OCI-LY7 (cell line): ENCODE measurements at regions of chr4 and their contacts with region 1.

Region 1: DNA sequence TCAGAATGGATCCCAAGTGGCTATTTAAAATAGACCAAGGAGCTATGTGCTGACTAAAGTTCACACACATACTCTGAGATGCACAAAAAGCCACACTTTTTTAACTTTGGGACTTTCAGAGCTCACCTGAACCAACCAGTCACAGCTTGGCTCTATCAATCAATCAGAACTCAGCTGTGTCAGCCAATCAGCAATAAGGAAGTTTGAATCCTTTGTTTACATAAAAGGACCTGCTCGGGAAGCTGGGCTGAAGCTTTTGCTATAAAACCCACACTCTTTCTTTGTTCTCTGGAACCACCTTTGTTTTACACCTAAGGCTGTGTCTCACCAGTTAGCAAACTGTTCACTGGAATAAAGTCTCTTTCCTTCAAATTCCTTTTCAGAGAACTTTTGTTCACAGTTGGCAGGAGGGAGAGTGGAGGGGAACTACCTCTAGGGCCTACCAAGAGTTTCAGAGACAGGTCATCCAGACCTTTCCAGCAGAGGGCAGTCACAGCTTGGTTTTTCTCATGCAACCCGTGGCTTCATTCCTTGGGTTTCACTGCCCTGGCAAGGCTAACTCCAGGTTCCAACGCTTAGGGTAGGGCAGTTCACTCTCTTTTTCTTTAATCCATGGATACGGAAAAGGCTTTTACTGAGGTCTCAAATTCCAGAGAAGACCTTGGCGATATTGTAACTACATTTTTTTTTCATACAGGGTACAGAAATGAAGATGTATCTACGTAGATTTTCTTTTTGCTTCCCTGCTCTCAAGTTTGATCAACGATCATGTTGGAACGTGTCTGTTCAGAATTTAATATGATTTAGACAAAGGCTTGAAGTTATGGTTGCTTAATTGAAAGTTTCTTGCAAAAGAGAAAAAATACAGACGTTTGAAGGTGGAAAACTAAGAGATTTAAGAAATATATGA is 80.7 kb downstream of the GPRIN3 start:
- DNase-seq: peak; percentile 84
- H3K4me3 ChIP-seq: no peak overlapping the region
- H3K27ac ChIP-seq: no peak overlapping the region
- H3K4me1 ChIP-seq: no peaks in the 10 kb centered on the region
- CTCF ChIP-seq: peak; percentile 93

Region 2: DNA sequence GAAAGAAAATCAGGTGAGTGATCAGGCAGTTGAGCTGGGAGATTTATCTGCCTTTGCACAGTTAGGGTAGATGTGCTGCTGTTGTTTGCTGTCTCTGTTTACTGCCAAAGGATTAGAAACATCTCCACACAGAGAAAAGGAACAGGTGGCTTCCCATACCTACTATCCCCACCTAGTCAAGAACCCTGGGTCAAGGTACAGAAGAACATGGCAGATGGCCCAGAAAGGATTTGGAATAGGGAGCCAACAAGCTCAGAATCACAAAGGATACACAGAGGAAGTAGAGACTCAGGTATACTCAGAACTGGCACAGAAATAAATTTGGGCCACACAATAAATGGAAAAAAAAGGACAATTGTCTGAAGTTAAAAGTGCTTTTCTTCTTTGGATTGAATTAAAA is 51.3 kb before region 1 on chr4:
- CTCF ChIA-PET with region 1: no interaction called
- POLR2A ChIA-PET with region 1: no interaction called
- intact Hi-C with region 1: no loop called
- DNase-seq: no peak
- H3K4me3 ChIP-seq: no peak overlapping the region
- H3K27ac ChIP-seq: no peak overlapping the region
- H3K4me1 ChIP-seq: no peaks in the 10 kb centered on the region
- CTCF ChIP-seq: no peak

Region 3: GRCh38 chr4:89216866-89217265 is 10.1 kb before region 1 on chr4:
- CTCF ChIA-PET with region 1: no interaction called
- POLR2A ChIA-PET with region 1: interaction called, 11 read pairs
- intact Hi-C with region 1: no loop called
- DNase-seq: no peak
- H3K4me3 ChIP-seq: no peak overlapping the region
- H3K27ac ChIP-seq: no peak overlapping the region
- H3K4me1 ChIP-seq: no peaks in the 10 kb centered on the region
- CTCF ChIP-seq: no peak

Region 4: DNA sequence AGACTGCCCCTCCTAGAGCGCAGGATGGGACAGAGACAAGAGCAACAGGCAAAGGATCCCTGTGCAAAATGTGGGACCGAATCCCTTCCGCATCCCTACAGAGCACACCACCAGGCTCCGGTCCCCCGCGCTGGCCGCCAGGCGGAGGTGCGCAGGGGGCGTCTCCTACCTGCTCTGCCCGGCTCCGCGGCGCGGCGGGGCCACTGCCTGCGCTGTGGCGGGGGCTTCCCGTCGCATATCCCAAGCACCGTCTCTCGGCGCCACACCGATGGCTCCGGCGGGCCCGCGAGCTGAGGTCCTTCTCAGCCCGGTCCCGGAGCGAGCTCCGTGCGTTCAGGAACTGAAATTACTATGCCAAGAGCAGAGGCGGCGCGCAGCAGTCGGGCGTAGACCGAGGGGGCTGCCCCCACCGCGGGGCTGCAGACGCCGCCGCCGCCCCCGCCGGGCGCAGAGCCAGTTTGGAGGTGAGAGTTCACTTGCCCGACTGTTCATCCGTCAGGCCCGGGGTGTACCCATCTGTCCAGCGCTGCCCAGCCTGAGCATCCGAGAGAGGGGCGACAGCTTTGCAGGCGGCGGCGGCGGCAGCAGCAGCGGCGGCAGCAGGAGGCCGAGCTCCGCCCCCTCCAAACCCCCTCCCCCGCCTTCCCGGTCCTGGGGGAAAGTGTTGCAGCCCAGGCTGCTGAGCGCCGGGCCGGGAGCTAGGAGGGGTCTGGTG is 80.7 kb after region 1 on chr4 and contains the start of gene GPRIN3:
- CTCF ChIA-PET with region 1: no interaction called
- POLR2A ChIA-PET with region 1: no interaction called
- intact Hi-C with region 1: loop called (anchors 5 kb)
- DNase-seq: peak; percentile 67
- H3K4me3 ChIP-seq: peak within 1 kb of the TSS; percentile 82
- H3K27ac ChIP-seq: peak within 1 kb of the TSS; percentile 26
- H3K4me1 ChIP-seq: peaks cover 48% of the 10 kb centered on the region
- CTCF ChIP-seq: no peak
- total RNA-seq, gene GPRIN3: 3.6 and 4.6 TPM in 2 replicates

Region 5: GRCh38 chr4:89353514-89353913 is 126.6 kb after region 1 on chr4:
- CTCF ChIA-PET with region 1: no interaction called
- POLR2A ChIA-PET with region 1: interaction called, 5 read pairs
- intact Hi-C with region 1: loop called (anchors 2 kb)
- DNase-seq: peak; percentile 44
- H3K4me3 ChIP-seq: no peak overlapping the region
- H3K27ac ChIP-seq: no peak overlapping the region
- H3K4me1 ChIP-seq: no peaks in the 10 kb centered on the region
- CTCF ChIP-seq: peak; percentile 52

Region 6: DNA sequence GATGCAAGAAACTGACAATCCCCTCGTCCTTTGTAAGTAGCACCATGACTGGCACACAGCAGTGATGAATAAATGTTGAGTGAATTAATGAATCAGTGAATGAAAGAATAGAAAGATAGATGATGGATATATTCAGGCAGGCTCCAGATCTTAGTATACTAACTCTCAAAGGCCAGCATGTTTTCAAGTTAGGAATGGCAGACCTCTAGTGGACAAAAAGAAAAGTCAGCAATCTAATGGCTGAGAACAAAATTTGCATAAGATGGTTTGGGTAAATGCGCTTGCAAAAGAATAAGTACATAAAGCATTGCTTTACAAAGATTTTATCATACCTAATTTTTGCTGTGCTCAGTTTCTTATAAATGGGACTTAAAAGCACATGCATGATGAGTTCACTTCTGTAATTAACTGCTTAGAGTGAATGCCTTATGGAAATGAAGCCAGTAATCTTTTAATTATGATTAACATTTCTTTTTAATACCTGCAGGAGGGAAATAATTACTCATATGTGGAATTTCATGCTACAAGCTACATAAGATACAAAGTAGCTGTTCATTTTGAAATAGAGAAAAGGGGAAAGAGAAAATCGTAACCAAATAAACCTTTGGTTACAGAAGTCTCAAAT is 207.6 kb after region 1 on chr4:
- CTCF ChIA-PET with region 1: interaction called, 3 read pairs
- POLR2A ChIA-PET with region 1: interaction called, 11 read pairs
- intact Hi-C with region 1: loop called (anchors 1 kb)
- DNase-seq: peak; percentile 64
- H3K4me3 ChIP-seq: no peak overlapping the region
- H3K27ac ChIP-seq: no peak overlapping the region
- H3K4me1 ChIP-seq: no peaks in the 10 kb centered on the region
- CTCF ChIP-seq: peak; percentile 96

Region 7: GRCh38 chr4:89563431-89563830 is 336.5 kb after region 1 on chr4:
- CTCF ChIA-PET with region 1: no interaction called
- POLR2A ChIA-PET with region 1: no interaction called
- intact Hi-C with region 1: loop called (anchors 10 kb)
- DNase-seq: no peak
- H3K4me3 ChIP-seq: no peak overlapping the region
- H3K27ac ChIP-seq: no peak overlapping the region
- H3K4me1 ChIP-seq: no peaks in the 10 kb centered on the region
- CTCF ChIP-seq: no peak

Region 8: DNA sequence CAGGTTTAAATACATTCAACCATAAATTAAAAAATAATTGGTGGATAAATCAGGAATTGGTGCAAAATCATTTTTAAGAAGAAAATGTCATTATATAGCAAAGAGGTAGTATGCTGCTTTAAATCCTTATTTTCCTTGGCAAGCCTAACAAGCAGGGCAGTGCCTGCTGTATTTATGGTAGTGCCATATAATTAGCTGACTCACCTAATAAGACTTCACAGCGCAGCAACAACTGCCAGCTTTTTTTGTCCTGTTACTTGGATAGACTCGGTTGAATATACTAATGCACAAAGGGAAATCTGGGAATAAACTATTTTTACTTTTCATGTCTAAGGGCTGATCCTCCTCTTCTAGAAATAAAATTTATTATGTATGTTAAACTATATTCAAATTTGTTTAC is 511.0 kb after region 1 on chr4:
- CTCF ChIA-PET with region 1: no interaction called
- POLR2A ChIA-PET with region 1: no interaction called
- intact Hi-C with region 1: no loop called
- DNase-seq: no peak
- H3K4me3 ChIP-seq: no peak overlapping the region
- H3K27ac ChIP-seq: no peak overlapping the region
- H3K4me1 ChIP-seq: no peaks in the 10 kb centered on the region
- CTCF ChIP-seq: no peak

Region 9: DNA sequence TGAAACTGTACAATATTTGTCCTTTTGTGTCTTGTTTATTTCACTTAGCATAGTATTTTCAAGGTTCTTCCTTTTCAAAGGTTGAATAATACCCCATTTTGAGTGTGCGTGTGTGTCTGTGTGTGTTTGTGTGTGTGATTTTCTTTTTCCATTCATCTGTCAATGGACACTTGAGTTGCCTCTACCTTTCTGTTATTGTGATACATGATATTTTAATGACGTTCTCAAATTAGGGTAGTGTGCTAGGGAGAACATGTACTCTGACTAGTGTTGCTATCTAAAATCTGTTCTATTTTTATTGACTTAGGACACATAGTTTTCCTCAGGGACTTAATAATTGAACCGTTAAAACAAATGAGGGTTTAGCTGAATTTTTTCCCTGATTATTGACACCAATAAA is 677.6 kb after region 1 on chr4:
- CTCF ChIA-PET with region 1: no interaction called
- POLR2A ChIA-PET with region 1: no interaction called
- intact Hi-C with region 1: loop called (anchors 5 kb)
- DNase-seq: no peak
- H3K4me3 ChIP-seq: no peak overlapping the region
- H3K27ac ChIP-seq: no peak overlapping the region
- H3K4me1 ChIP-seq: no peaks in the 10 kb centered on the region
- CTCF ChIP-seq: no peak